ENCODE measurements at regions of chr17 and their contacts with region 1.

Region 1: DNA sequence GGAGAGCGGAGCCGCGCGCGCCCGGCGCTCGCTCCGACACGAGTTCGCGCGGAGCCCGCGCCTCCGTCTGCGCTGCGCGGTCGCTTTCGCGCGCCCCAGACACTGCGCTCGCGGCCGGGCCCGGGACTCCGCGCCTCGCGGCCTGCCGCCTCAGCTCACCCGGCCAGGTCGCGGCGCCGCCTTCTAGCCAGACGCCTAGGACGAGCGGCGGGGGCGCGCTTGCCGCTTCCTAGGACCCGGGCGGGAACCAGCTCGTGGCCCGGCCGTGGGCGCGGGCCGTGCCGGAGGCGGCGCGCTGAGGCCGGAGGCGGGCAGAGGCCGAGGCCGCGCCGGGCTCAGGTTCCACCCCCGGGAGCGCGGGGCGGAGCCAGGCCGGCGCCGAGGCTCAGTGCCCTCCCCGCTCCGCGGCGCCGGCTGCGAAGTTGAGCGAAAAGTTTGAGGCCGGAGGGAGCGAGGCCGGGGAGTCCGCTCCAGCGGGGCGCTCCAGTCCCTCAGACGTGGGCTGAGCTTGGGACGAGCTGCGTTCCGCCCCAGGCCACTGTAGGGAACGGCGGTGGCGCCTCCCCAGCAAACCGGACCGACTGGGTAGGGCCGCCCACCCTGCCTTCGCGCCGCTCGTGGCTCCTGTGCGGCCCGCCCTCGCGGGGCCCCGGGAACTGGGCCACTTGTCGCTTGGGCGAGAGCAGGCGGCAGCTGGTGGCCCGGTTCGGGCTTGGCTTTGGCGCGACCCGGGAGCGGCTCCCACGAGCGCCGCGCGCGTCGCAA is at the start of gene SPHK1:
- H3K4me3 ChIP-seq: peak within 1 kb of the TSS; percentile 54
- H3K27ac ChIP-seq: peak within 1 kb of the TSS; percentile 77; the same call in 1 of the 2 replicates
- H3K4me1 ChIP-seq: peaks cover 8% of the 10 kb centered on the region; the same call in 1 of the 2 replicates
- CTCF ChIP-seq: peak; percentile 36; the same call in 1 of the 2 replicates

Region 2: DNA sequence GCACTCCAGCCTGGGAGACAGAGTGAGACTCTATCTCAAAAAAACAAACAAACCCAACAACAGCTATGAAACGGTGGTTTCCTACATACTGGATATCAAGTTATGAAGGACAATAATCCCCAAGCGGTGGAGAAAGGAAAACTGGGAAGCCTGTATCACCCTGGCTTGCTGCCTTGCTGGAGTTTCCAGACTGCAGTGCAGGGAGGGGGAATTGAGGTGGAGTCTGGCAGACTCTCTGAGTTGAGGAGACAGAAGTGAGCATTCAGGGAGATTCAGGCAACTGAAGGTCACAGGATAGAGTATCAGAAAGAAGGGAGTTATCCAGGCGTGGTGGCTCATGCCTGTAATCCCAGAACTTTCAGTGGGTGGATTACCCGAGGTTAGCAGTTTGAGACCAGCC is 88.2 kb before region 1 on chr17:
- CTCF ChIA-PET with region 1: interaction called, 49 read pairs
- POLR2A ChIA-PET with region 1: no interaction called
- H3K4me3 ChIP-seq: no peak overlapping the region
- H3K27ac ChIP-seq: no peak overlapping the region
- H3K4me1 ChIP-seq: no peaks in the 10 kb centered on the region
- CTCF ChIP-seq: no peak

Region 3: DNA sequence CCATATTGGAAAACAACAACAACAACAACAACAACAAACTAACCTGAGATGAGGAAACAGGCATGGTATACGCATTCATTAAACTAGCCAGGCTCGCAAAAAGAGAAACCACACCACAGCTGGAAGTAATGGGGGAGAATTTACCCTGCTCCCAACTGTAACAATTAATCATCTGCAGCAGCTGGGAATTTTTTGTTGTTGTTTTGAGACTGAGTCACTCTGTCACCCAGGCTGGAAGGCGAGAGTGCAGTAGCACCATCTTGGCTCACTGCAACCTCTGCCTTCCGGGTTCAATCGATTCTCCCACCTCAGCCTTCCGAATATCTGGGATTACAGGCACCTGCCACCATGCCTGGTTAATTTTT is 47.0 kb before region 1 on chr17:
- CTCF ChIA-PET with region 1: interaction called, 10 read pairs
- POLR2A ChIA-PET with region 1: interaction called, 3 read pairs
- H3K4me3 ChIP-seq: no peak overlapping the region
- H3K27ac ChIP-seq: no peak overlapping the region
- H3K4me1 ChIP-seq: peaks cover 4% of the 10 kb centered on the region; the same call in 1 of the 2 replicates
- CTCF ChIP-seq: no peak

Region 4: DNA sequence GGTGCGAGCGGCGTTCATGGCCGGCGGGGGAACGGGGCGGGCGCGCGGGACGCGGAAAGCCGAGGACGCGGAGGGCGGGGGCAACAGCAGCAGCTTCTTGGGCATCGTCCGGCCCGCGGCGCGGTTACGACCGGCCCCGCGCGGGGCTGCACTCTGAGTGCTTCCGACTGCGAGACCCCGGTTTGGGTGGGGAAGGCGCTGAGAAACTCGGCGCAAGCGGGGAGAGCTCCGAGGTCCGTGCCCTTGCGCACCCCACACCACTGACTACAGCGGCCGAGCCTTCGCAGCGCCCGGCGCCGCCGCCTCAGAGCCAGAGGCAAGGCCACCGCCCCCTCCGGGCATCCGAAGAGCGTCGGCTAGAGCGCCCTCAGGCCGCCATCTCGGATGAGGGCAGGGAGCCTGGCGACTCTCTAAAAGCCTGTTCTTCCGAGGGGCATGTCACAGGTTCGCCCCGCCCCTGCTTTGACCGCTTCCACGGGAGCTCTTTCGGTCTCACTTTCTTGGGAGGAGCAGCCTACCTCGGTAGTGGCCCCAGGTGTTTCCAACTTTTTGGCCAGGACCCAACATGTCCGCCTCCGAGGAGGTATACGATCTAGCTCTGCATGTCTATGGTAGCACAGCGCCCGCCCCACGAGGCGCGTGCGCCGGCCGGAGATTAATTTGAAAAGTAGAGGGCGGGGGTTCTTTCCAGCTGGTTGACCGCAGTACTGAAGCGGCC is 30.6 kb before region 1 on chr17 and contains the start of gene PRPSAP1:
- CTCF ChIA-PET with region 1: interaction called, 38 read pairs
- POLR2A ChIA-PET with region 1: interaction called, 51 read pairs
- H3K4me3 ChIP-seq: peak within 1 kb of the TSS; percentile 90
- H3K27ac ChIP-seq: peak within 1 kb of the TSS; percentile 96
- H3K4me1 ChIP-seq: peaks cover 12% of the 10 kb centered on the region; the same call in 1 of the 2 replicates
- CTCF ChIP-seq: peak; percentile 69

Region 5: GRCh38 chr17:76363107-76363842 is 21.1 kb before region 1 on chr17:
- CTCF ChIA-PET with region 1: interaction called, 11 read pairs
- POLR2A ChIA-PET with region 1: interaction called, 6 read pairs
- H3K4me3 ChIP-seq: no peak overlapping the region
- H3K27ac ChIP-seq: no peak overlapping the region
- H3K4me1 ChIP-seq: peaks cover 12% of the 10 kb centered on the region; the same call in 1 of the 2 replicates
- CTCF ChIP-seq: no peak

Region 6: DNA sequence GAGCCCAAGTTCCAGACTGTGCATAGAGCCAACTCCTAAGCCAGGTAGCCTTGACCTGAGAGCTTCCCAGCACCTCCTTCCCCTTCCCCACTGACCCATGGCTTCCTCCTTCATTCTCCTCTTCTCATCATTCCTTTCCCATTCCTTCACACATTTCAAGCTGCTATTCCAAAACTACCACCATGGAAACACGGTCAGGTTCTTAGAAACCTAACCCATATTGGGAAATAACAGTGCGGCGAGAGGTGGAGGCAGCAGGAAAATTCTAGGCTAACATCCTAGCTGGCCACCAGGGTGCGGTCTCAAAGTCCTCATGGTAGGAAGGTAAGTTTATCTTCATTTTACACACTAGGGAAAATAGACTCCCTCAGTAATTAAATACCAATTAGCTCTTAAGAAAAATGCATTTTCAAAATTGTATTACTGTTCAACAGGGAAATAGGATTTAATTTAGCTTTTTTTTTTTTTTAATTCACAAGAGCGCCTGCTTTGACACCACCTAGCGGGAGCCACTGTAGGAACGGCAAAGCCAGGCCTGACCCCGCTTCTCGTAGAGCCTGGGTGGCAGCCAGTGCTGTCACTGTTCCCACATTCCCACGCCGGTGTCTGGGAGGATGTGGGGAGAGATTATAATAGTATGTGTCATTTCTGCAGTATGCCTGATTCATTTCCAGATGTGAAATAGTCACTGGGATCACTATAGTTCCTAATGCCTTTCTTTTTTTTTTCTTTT is 14.0 kb before region 1 on chr17:
- CTCF ChIA-PET with region 1: interaction called, 17 read pairs
- POLR2A ChIA-PET with region 1: interaction called, 6 read pairs
- H3K4me3 ChIP-seq: no peak overlapping the region
- H3K27ac ChIP-seq: no peak overlapping the region
- H3K4me1 ChIP-seq: peaks cover 12% of the 10 kb centered on the region
- CTCF ChIP-seq: no peak